OCI-LY7 (cell line): ENCODE measurements at regions of chr12 and their contacts with region 1.

Region 1: DNA sequence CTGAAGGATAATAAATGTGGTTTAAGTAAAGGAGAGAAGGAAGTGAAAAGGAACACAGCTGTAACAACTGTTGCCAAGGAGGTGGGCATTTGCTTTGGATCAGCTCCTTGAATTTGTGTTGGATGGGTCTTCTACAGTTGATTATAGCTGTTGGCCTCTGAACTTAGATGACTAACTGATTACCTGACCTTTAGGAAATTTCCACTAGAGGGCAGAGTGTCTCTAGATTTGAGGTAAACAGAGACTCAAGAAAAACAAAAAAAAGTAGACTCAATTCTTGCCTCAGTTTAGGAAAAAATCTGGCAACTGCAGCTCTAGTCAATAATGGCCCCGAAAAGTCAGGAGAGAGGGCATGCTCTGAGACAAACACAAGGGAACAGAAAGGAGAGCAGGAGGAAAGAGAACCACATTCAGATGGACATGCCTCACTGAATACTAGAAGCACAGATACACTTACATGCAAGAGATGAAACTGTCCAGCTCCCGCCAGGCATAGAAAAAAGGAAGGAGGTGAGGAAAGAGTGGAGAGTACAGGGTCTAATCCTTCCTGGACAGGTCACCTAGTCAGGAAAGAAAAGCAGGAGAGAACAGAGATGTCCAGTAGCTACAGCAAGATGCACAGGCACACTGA is 20.6 kb downstream of the COX14 start:
- DNase-seq: peak; percentile 69
- H3K4me3 ChIP-seq: no peak overlapping the region
- H3K27ac ChIP-seq: no peak overlapping the region
- H3K4me1 ChIP-seq: no peaks in the 10 kb centered on the region
- CTCF ChIP-seq: peak; percentile 94

Region 2: GRCh38 chr12:49950273-49951251 is 182.1 kb before region 1 on chr12 and contains the start of gene AQP2:
- CTCF ChIA-PET with region 1: interaction called, 10 read pairs
- POLR2A ChIA-PET with region 1: no interaction called
- intact Hi-C with region 1: no loop called
- DNase-seq: no peak
- H3K4me3 ChIP-seq: no peak within 1 kb of the TSS
- H3K27ac ChIP-seq: no peak within 1 kb of the TSS
- H3K4me1 ChIP-seq: no peaks in the 10 kb centered on the region
- CTCF ChIP-seq: no peak
- total RNA-seq, gene AQP2: not detected in 2 replicates

Region 3: DNA sequence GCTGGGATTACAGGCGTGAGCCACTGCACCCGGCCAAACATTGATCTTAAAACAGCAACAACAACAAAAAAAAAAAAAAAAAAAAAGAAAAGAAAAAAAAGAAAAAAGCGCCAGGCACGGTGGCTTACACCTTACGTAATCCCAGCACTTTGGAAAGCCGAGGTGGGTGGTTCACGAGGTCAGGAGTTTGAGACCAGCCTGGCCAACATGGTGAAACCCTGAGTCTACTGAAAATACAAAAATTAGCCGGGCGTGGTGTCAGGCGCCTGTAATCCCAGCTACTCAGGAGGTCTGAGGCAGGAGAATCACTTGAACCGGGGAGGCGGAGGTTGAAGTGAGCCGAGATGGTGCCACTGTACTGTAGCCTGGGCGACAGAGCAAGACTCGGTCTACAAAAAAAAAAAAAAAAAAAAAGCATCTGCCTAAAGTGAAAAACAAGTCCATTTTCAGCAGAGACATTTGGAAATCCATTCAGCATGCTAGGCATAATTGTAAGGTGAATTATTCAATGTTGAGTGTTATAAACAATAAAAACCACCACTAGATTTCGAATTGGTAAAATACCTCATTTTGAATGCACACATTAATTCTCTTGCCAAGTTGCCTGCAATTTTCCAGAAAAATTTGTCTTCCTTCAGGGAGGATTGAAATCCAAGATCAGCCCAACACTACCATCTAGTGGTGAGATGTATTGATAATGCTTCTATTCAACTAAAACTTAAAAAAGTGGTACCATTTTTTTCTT is 42.5 kb after region 1 on chr12:
- CTCF ChIA-PET with region 1: interaction called, 4 read pairs
- POLR2A ChIA-PET with region 1: interaction called, 5 read pairs
- intact Hi-C with region 1: loop called (anchors 1 kb)
- DNase-seq: peak; percentile 69
- H3K4me3 ChIP-seq: no peak overlapping the region
- H3K27ac ChIP-seq: no peak overlapping the region
- H3K4me1 ChIP-seq: no peaks in the 10 kb centered on the region
- CTCF ChIP-seq: peak; percentile 97

Region 4: GRCh38 chr12:50246873-50247612 is 114.4 kb after region 1 on chr12:
- CTCF ChIA-PET with region 1: no interaction called
- POLR2A ChIA-PET with region 1: no interaction called
- intact Hi-C with region 1: no loop called
- DNase-seq: no peak
- H3K4me3 ChIP-seq: no peak overlapping the region
- H3K27ac ChIP-seq: no peak overlapping the region
- H3K4me1 ChIP-seq: no peaks in the 10 kb centered on the region
- CTCF ChIP-seq: no peak

Region 5: DNA sequence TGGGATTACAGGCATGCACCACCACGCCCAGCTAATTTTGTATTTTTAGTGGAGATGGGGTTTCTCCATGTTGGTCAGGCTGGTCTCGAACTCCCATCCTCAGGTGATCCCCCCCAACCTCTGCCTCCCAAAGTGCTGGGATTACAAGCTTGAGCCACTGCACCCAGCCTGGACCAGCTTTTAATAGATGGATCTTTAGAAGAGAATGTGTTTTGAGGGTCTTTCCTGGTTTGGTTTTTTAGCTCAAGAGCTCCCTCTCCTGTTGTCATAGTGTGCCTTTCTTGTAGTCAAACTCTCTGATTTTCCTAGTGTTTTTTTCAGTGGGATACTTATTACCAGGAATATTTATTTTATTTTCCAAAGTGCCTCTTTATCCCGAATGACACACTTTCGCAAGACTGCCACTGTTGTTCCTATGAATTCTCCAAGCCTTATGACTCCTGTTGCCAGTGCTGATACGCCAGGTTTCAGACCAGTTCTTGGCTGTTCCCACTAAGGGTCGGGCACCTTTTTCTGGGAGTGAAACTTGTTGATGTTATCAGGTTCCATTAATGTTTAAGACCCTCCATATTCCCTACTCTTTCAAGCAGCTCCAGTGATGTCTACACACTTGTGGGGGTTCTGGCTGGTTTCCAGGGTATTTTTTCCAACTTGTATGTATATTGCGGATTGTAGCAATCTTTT is 182.2 kb after region 1 on chr12:
- CTCF ChIA-PET with region 1: interaction called, 3 read pairs
- POLR2A ChIA-PET with region 1: no interaction called
- intact Hi-C with region 1: loop called (anchors 1 kb)
- DNase-seq: peak; percentile 50
- H3K4me3 ChIP-seq: no peak overlapping the region
- H3K27ac ChIP-seq: no peak overlapping the region
- H3K4me1 ChIP-seq: no peaks in the 10 kb centered on the region
- CTCF ChIP-seq: peak; percentile 85